Dendritic cell treated with granulocyte-macrophage colony-stimulating factor and Interleukin-4, amounts not matched to agents 40 ng/mL and 50 ng/mL, for 4 days (primary cell): ENCODE measurements at regions of chr2 and their contacts with region 1.

Region 1: DNA sequence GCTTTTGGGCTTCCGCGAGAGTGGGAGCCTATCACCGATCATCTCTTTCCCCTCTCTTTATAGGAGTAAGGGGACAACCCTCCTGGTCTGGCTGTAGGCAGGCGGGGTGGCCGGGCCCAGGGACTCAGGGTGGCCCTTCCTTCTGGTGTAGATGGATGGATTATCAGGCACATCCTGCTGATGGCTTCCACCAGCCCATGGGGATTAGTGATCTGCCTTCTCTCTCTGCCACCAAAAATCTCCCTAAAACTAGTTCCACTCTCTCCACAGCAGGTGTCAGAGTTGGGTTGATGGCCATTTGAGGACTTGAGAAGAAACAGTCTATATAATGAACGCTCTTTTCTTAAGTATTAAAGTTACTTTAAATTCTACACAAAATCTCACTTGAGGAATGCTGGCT is 37.4 kb downstream of the NCK2 start:
- H3K4me3 Mint-ChIP-seq: no peak overlapping the region
- H3K27ac Mint-ChIP-seq: no peak overlapping the region
- H3K4me1 Mint-ChIP-seq: peaks cover 43% of the 10 kb centered on the region
- H3K27me3 Mint-ChIP-seq: no peaks in the 10 kb centered on the region

Region 2: DNA sequence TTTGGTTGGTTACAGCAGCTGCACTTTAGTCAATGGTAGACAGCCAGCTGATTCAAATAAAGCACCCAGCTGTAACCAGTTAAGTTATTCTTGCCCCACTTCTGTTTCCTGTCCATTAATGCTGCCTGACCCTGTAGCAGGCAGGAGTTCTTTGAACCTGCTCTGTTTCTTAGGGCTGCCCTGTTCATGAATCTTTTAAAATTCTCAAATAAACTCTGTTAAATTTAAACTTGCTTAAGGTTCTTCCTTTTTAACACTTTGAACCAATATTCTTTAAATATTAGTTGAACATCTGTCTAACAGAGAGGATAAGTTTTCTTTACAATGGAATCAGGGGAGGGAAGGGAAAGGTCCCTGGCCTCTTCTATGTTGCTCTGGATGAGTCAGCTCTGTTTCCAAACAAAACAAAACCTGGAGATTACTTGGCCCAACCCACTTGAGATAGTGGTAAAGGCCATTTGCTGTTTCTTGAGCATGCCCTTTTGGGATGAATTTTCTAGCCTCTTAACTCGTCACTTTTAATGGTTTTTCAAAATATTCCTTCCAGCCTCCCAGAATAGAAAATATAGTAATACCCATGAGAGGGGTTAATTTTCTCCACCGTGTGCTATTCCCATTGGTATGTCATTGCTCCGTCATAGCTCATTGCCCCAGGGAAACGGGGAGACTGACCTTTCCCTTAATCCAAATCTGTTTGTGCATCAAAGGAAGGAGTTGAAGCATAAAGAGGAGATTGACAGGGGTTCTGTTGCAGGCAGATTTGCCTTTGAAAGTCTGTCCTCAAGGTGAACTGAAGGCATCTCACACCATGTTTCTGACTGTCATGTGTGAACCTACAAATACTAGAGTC is 271.1 kb before region 1 on chr2:
- intact Hi-C with region 1: no loop called
- H3K4me3 Mint-ChIP-seq: no peak overlapping the region
- H3K27ac Mint-ChIP-seq: no peak overlapping the region
- H3K4me1 Mint-ChIP-seq: no peaks in the 10 kb centered on the region
- H3K27me3 Mint-ChIP-seq: no peaks in the 10 kb centered on the region

Region 3: DNA sequence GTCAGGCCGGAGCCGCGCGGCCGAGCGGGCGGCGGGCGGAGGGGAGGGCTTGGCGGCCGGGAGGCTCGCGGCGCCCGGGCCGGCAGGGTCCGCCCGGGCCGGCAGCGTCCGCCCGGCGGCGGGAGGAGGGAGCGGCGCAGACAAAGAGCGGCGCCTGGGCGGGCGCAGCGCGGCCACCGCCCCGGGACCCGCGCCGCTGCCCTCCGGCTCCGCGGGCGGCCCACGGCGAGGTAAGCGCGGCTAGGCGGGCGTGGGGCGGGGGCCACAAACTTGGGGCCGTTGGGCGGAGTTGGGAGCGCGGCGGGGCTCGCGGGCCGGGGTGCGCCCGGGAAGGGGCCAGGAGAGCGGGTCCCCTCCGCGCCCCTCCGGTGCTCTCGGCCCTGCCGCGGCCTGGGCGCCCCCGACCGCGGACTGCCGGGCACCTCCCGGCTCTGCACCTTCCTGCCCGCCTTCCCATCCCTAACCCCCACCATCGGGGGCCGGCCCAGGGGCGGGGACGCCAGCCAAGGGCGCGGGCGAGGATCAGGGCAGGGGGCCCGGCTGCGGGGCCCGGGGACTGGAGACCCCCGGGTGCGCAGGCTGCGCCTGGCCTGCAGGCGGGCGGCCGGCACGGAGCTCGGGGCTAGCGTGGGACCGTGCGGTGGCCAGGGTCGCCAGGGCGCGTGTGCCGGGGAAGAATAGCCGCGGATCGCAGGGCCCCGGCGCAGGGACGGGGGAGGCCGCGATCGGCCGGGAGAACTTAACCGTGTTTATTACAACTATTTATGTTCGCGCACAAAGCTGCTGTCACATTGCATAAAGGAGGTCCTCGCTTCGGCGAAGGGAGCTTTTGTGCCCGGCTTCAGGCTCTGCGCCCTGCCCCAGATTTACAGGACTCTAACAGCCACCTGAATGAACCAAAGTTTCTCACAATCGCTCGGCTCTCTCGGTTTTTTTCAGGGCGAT is 36.9 kb before region 1 on chr2 and contains the start of gene NCK2:
- intact Hi-C with region 1: loop called (anchors 5 kb)
- H3K4me3 Mint-ChIP-seq: peak within 1 kb of the TSS; percentile 75
- H3K27ac Mint-ChIP-seq: peak within 1 kb of the TSS; percentile 70
- H3K4me1 Mint-ChIP-seq: peaks cover 41% of the 10 kb centered on the region
- H3K27me3 Mint-ChIP-seq: peaks cover 22% of the 10 kb centered on the region